ENCODE measurements at regions of chr11 and their contacts with region 1.

Region 1: GRCh38 chr11:113113801-113114706 is 152.8 kb downstream of the NCAM1 start:
- DNase-seq: peak; percentile 13 to 52
- H3K4me3 ChIP-seq: no peak overlapping the region
- H3K27ac ChIP-seq: no peak overlapping the region
- H3K4me1 ChIP-seq: no peaks in the 10 kb centered on the region
- H3K27me3 ChIP-seq: no peaks in the 10 kb centered on the region
- CTCF ChIP-seq: peak; percentile 73 to 82 (median 82)
- EP300 ChIP-seq: no peak
- POLR2A ChIP-seq: no peak
- RAD21 ChIP-seq: peak; percentile 88

Region 2: GRCh38 chr11:113096648-113097047 is 17.4 kb before region 1 on chr11:
- CTCF ChIA-PET with region 1: interaction called, 21 read pairs
- POLR2A ChIA-PET with region 1: no interaction called
- DNase-seq: no peak
- H3K4me3 ChIP-seq: no peak overlapping the region
- H3K27ac ChIP-seq: no peak overlapping the region
- H3K4me1 ChIP-seq: peaks cover 0 to 2% (median 0%) of the 10 kb centered on the region in 4 experiments; a peak in 1 of 7 replicates
- H3K27me3 ChIP-seq: no peaks in the 10 kb centered on the region
- CTCF ChIP-seq: no peak
- EP300 ChIP-seq: no peak
- POLR2A ChIP-seq: no peak
- RAD21 ChIP-seq: no peak

Measured in H1 (cell line).